Breast epithelium (tissue), 4 donors: ENCODE measurements at regions of chr2 and their contacts with region 1.

Region 1: GRCh38 chr2:59974051-59974766 is 579.2 kb downstream of the BCL11A start:
- DNase-seq: no peak
- H3K4me3 ChIP-seq: no peak overlapping the region
- H3K27ac ChIP-seq: no peak overlapping the region
- H3K4me1 ChIP-seq: no peaks in the 10 kb centered on the region
- H3K27me3 ChIP-seq: no peaks in the 10 kb centered on the region
- CTCF ChIP-seq: no peak
- POLR2A ChIP-seq: no peak

Region 2: GRCh38 chr2:59957504-59957903 is 16.7 kb before region 1 on chr2:
- intact Hi-C with region 1: no loop called
- DNase-seq: no peak
- H3K4me3 ChIP-seq: no peak overlapping the region
- H3K27ac ChIP-seq: no peak overlapping the region
- H3K4me1 ChIP-seq: no peaks in the 10 kb centered on the region
- H3K27me3 ChIP-seq: no peaks in the 10 kb centered on the region
- CTCF ChIP-seq: no peak
- POLR2A ChIP-seq: no peak

Region 3: DNA sequence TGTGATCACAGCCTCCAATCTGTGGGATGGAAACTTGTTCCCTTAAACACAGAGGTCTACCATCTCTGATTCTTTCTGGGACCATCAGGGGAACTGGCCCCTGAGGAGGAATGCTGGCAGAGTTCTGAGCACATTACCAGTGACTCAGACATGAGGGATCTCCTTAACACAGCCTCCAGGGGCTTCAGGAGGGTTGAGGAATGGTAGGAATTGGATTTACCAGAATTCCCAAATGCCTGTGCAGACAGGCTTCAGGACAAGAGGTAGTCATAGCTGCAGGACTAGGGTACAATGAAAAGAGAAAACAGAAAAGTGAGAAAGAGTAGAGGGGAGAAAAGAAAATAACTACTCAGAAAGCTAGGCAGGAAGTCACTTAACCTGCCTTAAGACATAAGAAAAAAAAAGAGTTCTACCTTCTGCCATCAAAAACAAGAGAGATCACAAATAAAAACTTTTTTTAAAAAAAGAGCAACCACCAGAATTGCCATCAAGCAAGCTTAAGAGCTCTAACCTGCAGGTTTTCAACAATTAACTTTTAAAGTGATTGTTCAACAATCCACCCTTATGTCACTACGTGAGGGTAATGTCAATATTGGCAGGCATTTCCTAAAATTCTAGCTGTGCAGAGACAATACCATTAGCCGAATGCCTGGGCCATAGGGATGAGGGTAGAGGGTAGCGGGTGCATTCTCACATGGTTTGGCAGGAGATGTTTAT is 54.8 kb after region 1 on chr2:
- intact Hi-C with region 1: no loop called
- DNase-seq: peak in 1 of 2 donors; percentile 46
- H3K4me3 ChIP-seq: no peak overlapping the region
- H3K27ac ChIP-seq: peak overlapping the region in 1 of 2 donors; percentile 38
- H3K4me1 ChIP-seq: no peaks in the 10 kb centered on the region
- H3K27me3 ChIP-seq: no peaks in the 10 kb centered on the region
- CTCF ChIP-seq: no peak
- POLR2A ChIP-seq: no peak

Region 4: DNA sequence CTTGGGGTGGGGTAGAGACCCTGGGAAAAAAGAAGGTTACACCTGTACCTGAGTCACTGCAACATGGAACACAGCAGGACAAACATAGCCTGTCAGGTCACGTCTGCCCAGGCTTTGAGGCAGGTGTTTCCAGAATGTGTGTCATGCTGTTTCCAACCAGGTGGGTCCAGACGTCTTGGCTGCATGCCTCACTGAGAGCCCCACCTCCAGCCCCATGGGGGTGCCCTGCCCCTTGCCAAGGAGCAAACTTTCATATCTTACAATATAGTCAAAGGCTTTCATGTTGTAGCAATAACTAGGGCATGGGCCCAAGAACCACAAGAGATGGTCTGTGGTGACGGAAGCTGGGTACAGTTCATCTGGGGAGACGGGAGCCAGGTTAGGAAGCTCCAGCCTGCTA is 79.6 kb after region 1 on chr2:
- intact Hi-C with region 1: loop called (anchors 2 kb)
- DNase-seq: no peak
- H3K4me3 ChIP-seq: no peak overlapping the region
- H3K27ac ChIP-seq: no peak overlapping the region
- H3K4me1 ChIP-seq: no peaks in the 10 kb centered on the region
- H3K27me3 ChIP-seq: no peaks in the 10 kb centered on the region
- CTCF ChIP-seq: no peak
- POLR2A ChIP-seq: no peak